CD8-positive, alpha-beta memory T cell (primary cell): ENCODE measurements at regions of chr17 and their contacts with region 1.

Region 1: GRCh38 chr17:46212634-46213435 is 19.6 kb upstream of the KANSL1 start:
- DNase-seq: peak; percentile 56 to 74 (median 64)
- H3K4me3 ChIP-seq: no peak overlapping the region
- H3K4me3 Mint-ChIP-seq: peak overlapping the region in 1 of 7 donors; percentile 22
- H3K27ac ChIP-seq: no peak overlapping the region
- H3K27ac Mint-ChIP-seq: peak overlapping the region; percentile 15 to 86 (median 50)
- H3K4me1 ChIP-seq: peaks cover 5% of the 10 kb centered on the region
- H3K4me1 Mint-ChIP-seq: peaks cover 18 to 43% (median 27%) of the 10 kb centered on the region in 3 donors
- H3K27me3 ChIP-seq: no peaks in the 10 kb centered on the region
- H3K27me3 Mint-ChIP-seq: no peaks in the 10 kb centered on the region

Region 2: DNA sequence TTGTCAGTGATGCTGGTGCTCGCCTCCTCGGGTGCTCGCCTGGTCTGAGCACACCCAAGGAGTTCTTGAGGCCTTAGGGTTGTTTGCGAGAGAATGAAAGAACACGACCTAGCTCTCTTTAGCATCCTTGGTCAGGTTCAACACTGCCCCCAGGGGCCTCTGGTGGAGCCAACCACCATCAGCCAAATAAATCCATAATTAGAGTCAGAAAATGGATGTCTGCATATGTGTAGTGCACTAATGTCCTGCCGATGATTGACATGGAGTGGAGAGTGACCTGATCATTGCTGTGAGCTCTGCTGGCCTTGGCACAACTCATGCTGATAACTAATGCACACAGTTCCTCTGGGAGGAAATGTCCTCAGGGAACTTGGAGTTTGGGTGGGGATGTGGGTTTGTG is 221.9 kb before region 1 on chr17:
- CTCF ChIA-PET with region 1: no interaction called
- POLR2A ChIA-PET with region 1: no interaction called
- DNase-seq: no peak
- H3K4me3 ChIP-seq: no peak overlapping the region
- H3K4me3 Mint-ChIP-seq: no peak overlapping the region
- H3K27ac ChIP-seq: no peak overlapping the region
- H3K27ac Mint-ChIP-seq: no peak overlapping the region
- H3K4me1 ChIP-seq: no peaks in the 10 kb centered on the region
- H3K4me1 Mint-ChIP-seq: no peaks in the 10 kb centered on the region
- H3K27me3 ChIP-seq: no peaks in the 10 kb centered on the region
- H3K27me3 Mint-ChIP-seq: no peaks in the 10 kb centered on the region

Region 3: DNA sequence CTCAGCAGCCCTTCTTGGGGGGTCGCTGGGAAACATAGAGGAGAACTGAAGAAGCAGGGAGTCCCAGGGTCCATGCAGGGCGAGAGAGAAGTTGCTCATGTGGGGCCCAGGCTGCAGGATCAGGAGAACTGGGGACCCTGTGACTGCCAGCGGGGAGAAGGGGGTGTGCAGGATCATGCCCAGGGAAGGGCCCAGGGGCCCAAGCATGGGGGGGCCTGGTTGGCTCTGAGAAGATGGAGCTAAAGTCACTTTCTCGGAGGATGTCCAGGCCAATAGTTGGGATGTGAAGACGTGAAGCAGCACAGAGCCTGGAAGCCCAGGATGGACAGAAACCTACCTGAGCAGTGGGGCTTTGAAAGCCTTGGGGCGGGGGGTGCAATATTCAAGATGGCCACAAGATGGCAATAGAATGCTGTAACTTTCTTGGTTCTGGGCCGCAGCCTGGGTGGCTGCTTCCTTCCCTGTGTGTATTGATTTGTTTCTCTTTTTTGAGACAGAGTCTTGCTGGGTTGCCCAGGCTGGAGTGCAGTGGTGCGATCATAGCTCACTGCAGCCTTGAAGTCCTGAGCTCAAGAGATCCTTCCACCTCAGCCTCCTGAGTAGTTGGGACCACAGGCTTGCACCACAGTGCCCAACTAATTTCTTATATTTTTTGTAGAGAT is 210.4 kb before region 1 on chr17:
- CTCF ChIA-PET with region 1: interaction called, 54 read pairs
- POLR2A ChIA-PET with region 1: interaction called, 9 read pairs
- DNase-seq: peak; percentile 60 to 77 (median 62)
- H3K4me3 ChIP-seq: no peak overlapping the region
- H3K4me3 Mint-ChIP-seq: no peak overlapping the region
- H3K27ac ChIP-seq: no peak overlapping the region
- H3K27ac Mint-ChIP-seq: peak overlapping the region in 3 of 8 donors; percentile 72 to 86 (median 85)
- H3K4me1 ChIP-seq: peaks cover 4% of the 10 kb centered on the region
- H3K4me1 Mint-ChIP-seq: peaks cover 0 to 3% (median 2%) of the 10 kb centered on the region in 3 donors
- H3K27me3 ChIP-seq: no peaks in the 10 kb centered on the region
- H3K27me3 Mint-ChIP-seq: peaks cover 0 to 1% of the 10 kb centered on the region in 2 donors

Region 4: GRCh38 chr17:46059486-46059885 is 153.3 kb before region 1 on chr17:
- CTCF ChIA-PET with region 1: interaction called, 14 read pairs
- POLR2A ChIA-PET with region 1: no interaction called
- DNase-seq: no peak
- H3K4me3 ChIP-seq: no peak overlapping the region
- H3K4me3 Mint-ChIP-seq: peak overlapping the region in 1 of 7 donors; percentile 65
- H3K27ac ChIP-seq: no peak overlapping the region
- H3K27ac Mint-ChIP-seq: peak overlapping the region in 3 of 8 donors; percentile 50 to 92 (median 75)
- H3K4me1 ChIP-seq: no peaks in the 10 kb centered on the region
- H3K4me1 Mint-ChIP-seq: peaks cover 28 to 57% (median 43%) of the 10 kb centered on the region in 3 donors
- H3K27me3 ChIP-seq: no peaks in the 10 kb centered on the region
- H3K27me3 Mint-ChIP-seq: no peaks in the 10 kb centered on the region

Region 5: DNA sequence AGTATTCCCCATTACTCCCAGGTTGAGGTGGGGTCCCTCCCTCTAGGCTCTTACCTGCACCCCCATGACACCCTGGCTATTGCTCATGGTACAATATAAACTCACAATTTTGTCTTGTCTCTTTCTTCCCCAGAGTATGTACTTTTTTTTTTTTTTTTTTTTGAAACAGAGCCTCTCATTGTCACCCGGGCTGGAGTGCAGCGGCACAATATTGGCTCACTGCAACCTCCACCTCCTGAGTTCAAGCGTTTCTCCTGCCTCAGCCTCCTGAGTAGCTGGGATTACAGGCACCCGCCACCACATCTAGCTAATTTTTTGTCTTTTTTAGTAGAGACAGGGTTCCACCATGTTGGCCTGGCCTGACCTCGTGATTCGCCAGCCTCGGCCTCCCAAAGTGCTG is 28.1 kb before region 1 on chr17:
- CTCF ChIA-PET with region 1: interaction called, 27 read pairs
- POLR2A ChIA-PET with region 1: interaction called, 5 read pairs
- DNase-seq: no peak
- H3K4me3 ChIP-seq: no peak overlapping the region
- H3K4me3 Mint-ChIP-seq: peak overlapping the region in 6 of 7 donors; percentile 28 to 82 (median 44)
- H3K27ac ChIP-seq: no peak overlapping the region
- H3K27ac Mint-ChIP-seq: peak overlapping the region; percentile 0 to 79 (median 46)
- H3K4me1 ChIP-seq: peaks cover 91% of the 10 kb centered on the region
- H3K4me1 Mint-ChIP-seq: peaks cover 87 to 98% (median 98%) of the 10 kb centered on the region in 3 donors
- H3K27me3 ChIP-seq: no peaks in the 10 kb centered on the region
- H3K27me3 Mint-ChIP-seq: no peaks in the 10 kb centered on the region

Region 6: DNA sequence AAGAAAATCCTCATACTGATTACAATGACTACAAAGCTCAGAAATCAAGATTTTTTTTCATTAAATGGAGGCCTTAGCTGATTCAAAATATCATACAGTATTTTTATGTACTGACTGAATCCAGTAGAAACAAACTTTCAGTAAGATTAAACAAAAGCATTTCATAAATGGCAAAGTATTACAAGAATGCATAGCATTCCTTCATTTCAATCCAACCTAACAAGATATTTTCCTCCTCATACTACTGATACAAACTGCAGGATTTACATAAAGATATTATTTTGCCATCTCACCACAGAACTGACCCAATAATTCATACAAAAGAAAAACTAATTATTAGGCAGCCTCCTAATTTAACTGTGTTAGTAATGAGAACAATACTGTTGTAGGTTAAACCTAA is 13.5 kb before region 1 on chr17:
- CTCF ChIA-PET with region 1: interaction called, 50 read pairs
- POLR2A ChIA-PET with region 1: interaction called, 16 read pairs
- DNase-seq: no peak
- H3K4me3 ChIP-seq: no peak overlapping the region
- H3K4me3 Mint-ChIP-seq: no peak overlapping the region
- H3K27ac ChIP-seq: no peak overlapping the region
- H3K27ac Mint-ChIP-seq: peak overlapping the region in 4 of 8 donors; percentile 56 to 74 (median 62)
- H3K4me1 ChIP-seq: peaks cover 66% of the 10 kb centered on the region
- H3K4me1 Mint-ChIP-seq: peaks cover 31 to 90% (median 47%) of the 10 kb centered on the region in 3 donors
- H3K27me3 ChIP-seq: no peaks in the 10 kb centered on the region
- H3K27me3 Mint-ChIP-seq: no peaks in the 10 kb centered on the region